HEK293T (cell line): ENCODE measurements at regions of chr5 and their contacts with region 1.

Region 1: DNA sequence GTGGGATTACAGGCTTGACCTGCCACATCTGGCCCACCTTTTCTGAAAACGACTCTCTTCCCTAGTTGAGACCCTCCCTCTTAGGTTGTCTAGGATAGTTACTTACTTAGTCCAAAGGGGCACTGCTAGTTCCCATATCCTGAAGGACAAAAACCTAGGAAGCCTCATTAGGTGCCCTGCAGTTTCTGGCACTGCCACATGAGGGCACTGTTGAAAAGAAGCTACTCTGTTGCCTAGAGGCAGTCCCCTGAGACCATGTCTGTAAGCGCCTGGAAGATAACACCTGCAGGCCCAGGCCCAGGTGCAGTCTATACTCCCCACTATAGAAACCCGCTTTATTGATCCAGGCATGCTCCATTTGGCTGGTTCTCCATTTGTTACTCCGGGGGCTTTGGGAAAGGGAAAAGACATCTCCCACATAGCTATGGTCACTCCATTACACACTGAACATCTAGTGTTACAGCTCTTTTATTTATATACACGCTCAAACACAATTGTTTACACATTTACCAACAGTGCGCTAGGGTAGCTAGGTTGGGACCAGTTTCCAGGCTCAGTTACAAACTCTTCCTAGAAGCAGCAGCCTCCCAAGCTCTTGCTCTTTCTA is 73.4 kb upstream of the PPARGC1B start:
- DNase-seq: peak; percentile 43

Region 2: DNA sequence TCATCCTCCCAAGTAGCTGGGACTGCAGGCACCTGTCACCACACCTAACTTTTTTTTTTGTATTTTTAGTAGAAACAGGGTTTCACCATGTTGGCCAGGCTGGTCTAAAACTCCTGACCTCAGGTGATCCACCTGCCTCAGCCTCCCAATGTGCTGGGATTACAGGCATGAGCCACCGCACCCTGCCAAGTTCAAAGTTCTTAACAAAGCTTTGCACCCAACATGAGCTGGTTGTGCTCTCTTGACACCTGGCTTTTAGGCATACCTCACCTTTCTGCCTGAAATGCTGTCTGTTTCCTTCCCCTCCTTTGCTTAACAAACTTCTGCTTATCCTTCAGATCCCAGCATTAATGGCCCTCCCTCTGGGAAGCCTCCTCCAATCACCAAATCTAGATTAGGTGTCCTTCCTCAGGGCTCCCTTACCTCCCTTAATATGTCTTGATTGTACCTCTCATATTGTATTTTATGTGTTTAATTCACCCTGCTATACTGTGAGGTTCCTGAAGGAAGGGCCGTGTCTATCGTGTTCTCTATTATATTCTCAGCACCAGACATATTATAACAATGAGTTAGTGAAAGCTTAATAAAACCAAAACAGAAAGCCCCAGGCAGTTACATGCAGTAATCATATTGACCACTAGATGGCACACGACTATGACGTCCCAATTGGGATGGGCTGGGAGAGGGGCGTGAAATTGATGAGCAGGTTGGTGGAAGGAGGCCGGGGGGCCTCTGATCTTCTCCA is 10.6 kb after region 1 on chr5:
- CTCF ChIA-PET with region 1: interaction called, 17 read pairs
- POLR2A ChIA-PET with region 1: no interaction called
- DNase-seq: peak; percentile 57

Region 3: GRCh38 chr5:149765932-149766331 is 109.3 kb after region 1 on chr5:
- CTCF ChIA-PET with region 1: no interaction called
- POLR2A ChIA-PET with region 1: no interaction called
- DNase-seq: no peak